Right ventricle myocardium inferior (tissue), 1 donor: ENCODE measurements at regions of chr2 and their contacts with region 1.

Region 1: DNA sequence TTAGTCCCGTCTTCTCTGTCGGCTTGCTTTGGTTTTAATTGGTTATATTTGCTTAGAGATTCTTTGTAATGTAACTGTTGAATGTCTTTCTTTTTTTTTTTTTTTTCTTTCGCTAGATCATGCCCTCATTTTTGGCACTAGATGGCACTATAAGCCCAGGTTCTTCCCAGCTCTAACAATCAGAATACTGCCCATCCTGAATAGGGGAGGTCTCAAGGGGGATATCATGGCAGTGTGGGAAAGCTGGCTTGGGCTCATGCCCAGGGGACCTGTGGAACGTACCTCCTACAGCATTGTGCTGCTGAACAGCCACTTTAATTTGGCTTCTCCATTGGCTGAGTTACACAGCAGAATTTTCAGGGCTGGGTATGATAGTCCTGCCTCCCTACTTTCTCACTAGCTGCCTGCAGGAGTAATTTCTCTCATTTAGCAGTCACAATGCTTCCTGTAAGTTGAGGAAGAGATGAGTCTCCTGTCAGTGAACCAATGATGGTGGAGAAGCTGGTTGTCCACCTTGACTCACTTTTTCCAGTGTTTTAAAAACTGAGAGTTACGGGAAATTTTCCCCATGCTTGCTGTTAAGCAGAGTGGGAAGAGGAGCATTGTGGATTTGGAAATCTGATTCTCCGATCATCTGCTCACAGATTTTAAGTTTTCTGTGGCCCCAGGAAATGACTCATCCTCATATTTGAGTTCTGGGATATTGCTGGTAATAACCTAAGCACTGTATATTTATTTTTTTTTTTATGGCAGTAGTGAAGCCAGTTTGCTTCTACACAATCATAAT is 47.2 kb downstream of the RAD51AP2 start:
- DNase-seq: no peak
- ATAC-seq: no peak

Region 2: DNA sequence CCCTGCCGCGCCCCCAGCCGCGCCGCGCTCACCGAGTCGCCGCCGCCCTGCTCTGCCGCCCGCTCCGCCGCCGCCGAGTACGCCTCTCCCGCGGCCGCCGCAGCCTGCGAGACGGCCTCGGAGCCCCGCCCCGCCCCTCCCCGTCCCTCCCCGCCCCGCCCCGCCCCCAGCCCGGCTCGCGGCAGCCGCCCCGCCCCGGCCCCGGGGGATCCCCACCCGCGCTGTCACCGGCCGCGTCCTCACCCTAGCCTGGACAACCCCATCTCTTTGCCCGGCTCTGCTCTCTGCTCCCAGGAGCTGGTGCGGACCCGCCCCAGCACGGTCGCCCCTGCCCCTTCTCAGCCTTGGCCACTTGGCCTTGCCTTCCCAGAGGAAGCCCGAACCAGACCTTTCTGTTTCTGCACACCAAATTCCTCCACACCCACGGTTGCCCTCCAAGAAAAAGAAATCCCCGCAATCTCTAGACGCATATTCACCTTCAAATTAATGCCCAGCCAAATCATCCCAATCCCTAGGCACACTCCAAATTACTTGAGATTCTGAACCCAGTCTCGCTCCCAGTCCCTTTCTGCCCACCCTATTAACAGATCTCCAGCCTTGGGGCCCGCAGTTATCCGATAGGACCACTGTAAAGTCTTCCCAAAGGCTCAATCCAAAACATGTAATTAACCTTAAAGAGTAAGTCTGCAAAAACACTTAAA is 805.1 kb before region 1 on chr2 and contains the start of gene CYRIA:
- intact Hi-C with region 1: no loop called
- DNase-seq: peak; percentile 86
- ATAC-seq: peak; percentile 83
- total RNA-seq, gene CYRIA: 5.1 TPM

Region 3: GRCh38 chr2:17672583-17673317 is 201.7 kb after region 1 on chr2:
- intact Hi-C with region 1: loop called (anchors 5 kb)
- DNase-seq: no peak
- ATAC-seq: no peak